Posterior vena cava (tissue), 2 donors: ENCODE measurements at regions of chr3 and their contacts with region 1.

Region 1: GRCh38 chr3:64295594-64295993 is 70.3 kb upstream of the PRICKLE2 start:
- DNase-seq: no peak

Region 2: GRCh38 chr3:64224826-64225610 is 70.6 kb before region 1 on chr3 and contains the start of gene PRICKLE2:
- intact Hi-C with region 1: no loop called
- DNase-seq: peak; percentile 92
- total RNA-seq, gene PRICKLE2: 26.3 to 34.9 TPM

Region 3: GRCh38 chr3:64259636-64260035 is 36.0 kb before region 1 on chr3:
- intact Hi-C with region 1: no loop called
- DNase-seq: no peak

Region 4: GRCh38 chr3:64306745-64307144 is 11.2 kb after region 1 on chr3:
- intact Hi-C with region 1: loop called in 1 of 2 experiments (anchors 1 kb)
- DNase-seq: no peak